Endothelial cell of umbilical vein (primary cell): ENCODE measurements at regions of chr4 and their contacts with region 1.

Region 1: DNA sequence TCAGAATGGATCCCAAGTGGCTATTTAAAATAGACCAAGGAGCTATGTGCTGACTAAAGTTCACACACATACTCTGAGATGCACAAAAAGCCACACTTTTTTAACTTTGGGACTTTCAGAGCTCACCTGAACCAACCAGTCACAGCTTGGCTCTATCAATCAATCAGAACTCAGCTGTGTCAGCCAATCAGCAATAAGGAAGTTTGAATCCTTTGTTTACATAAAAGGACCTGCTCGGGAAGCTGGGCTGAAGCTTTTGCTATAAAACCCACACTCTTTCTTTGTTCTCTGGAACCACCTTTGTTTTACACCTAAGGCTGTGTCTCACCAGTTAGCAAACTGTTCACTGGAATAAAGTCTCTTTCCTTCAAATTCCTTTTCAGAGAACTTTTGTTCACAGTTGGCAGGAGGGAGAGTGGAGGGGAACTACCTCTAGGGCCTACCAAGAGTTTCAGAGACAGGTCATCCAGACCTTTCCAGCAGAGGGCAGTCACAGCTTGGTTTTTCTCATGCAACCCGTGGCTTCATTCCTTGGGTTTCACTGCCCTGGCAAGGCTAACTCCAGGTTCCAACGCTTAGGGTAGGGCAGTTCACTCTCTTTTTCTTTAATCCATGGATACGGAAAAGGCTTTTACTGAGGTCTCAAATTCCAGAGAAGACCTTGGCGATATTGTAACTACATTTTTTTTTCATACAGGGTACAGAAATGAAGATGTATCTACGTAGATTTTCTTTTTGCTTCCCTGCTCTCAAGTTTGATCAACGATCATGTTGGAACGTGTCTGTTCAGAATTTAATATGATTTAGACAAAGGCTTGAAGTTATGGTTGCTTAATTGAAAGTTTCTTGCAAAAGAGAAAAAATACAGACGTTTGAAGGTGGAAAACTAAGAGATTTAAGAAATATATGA is 80.7 kb downstream of the GPRIN3 start:
- DNase-seq: peak; percentile 79
- H3K4me3 ChIP-seq: no peak overlapping the region
- H3K27ac ChIP-seq: no peak overlapping the region
- H3K4me1 ChIP-seq: peaks cover 2% of the 10 kb centered on the region
- H3K27me3 ChIP-seq: no peaks in the 10 kb centered on the region
- CTCF ChIP-seq: peak; percentile 70 to 75
- POLR2A ChIP-seq: no peak

Region 2: GRCh38 chr4:89158884-89159503 is 67.9 kb before region 1 on chr4:
- CTCF ChIA-PET with region 1: interaction called, 16 read pairs
- POLR2A ChIA-PET with region 1: no interaction called
- dilution Hi-C with region 1: no loop called
- intact Hi-C with region 1: loop called (anchors 1 kb)
- DNase-seq: peak; percentile 77
- H3K4me3 ChIP-seq: no peak overlapping the region
- H3K27ac ChIP-seq: no peak overlapping the region
- H3K4me1 ChIP-seq: peaks cover 23% of the 10 kb centered on the region
- H3K27me3 ChIP-seq: no peaks in the 10 kb centered on the region
- CTCF ChIP-seq: peak; percentile 44 to 47
- POLR2A ChIP-seq: no peak

Region 3: GRCh38 chr4:89164400-89164799 is 62.5 kb before region 1 on chr4:
- CTCF ChIA-PET with region 1: interaction called, 16 read pairs
- POLR2A ChIA-PET with region 1: no interaction called
- dilution Hi-C with region 1: no loop called
- intact Hi-C with region 1: loop called (anchors 1 kb)
- DNase-seq: no peak
- H3K4me3 ChIP-seq: no peak overlapping the region
- H3K27ac ChIP-seq: no peak overlapping the region
- H3K4me1 ChIP-seq: peaks cover 18% of the 10 kb centered on the region
- H3K27me3 ChIP-seq: no peaks in the 10 kb centered on the region
- CTCF ChIP-seq: peak in 1 of 2 donors; percentile 3
- POLR2A ChIP-seq: no peak

Region 4: DNA sequence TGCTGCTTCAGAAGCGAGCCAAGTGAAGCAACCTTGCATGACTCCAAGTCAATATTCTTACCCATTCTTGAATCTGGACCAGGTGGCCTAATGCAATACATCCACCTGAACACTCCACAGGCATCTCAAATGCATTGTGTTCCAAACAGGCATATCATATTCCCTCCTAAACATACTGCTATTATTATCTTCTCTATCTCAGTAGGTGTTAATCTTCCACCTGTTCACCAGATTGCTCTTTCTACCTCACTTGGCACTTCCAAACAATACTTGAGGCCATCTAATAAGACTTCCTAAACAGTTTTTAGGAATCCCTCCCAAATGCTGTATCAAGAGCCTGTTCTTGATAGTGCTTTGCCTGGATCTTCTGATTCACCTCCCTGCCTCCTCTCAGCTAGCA is 10.1 kb before region 1 on chr4:
- CTCF ChIA-PET with region 1: interaction called, 17 read pairs
- POLR2A ChIA-PET with region 1: no interaction called
- dilution Hi-C with region 1: no loop called
- intact Hi-C with region 1: no loop called
- DNase-seq: no peak
- H3K4me3 ChIP-seq: no peak overlapping the region
- H3K27ac ChIP-seq: no peak overlapping the region
- H3K4me1 ChIP-seq: no peaks in the 10 kb centered on the region
- H3K27me3 ChIP-seq: peaks cover 13 to 14% of the 10 kb centered on the region in 2 experiments
- CTCF ChIP-seq: no peak
- POLR2A ChIP-seq: no peak

Region 5: DNA sequence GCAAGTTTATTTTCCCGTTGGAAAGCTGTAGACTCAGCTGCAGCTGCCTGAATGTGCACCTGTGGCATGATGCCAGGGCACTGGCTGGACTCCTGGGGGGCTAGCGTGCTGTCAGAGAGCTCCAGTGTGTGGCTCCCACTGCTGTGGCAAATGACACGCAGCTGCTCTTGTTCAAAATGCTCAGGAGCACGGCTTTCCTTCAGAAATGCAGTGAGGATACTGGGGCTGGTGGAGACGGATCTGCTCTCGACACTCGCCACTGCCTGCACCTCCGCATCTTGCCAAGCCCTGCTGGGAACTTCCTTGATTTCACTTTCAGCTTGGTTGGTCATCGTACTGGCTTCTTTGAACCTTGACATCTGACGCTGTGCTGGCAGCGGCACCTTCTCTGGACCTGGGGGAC is 22.0 kb after region 1 on chr4:
- CTCF ChIA-PET with region 1: interaction called, 10 read pairs
- POLR2A ChIA-PET with region 1: no interaction called
- dilution Hi-C with region 1: no loop called
- intact Hi-C with region 1: no loop called
- DNase-seq: no peak
- H3K4me3 ChIP-seq: no peak overlapping the region
- H3K27ac ChIP-seq: no peak overlapping the region
- H3K4me1 ChIP-seq: no peaks in the 10 kb centered on the region
- H3K27me3 ChIP-seq: peaks cover 2 to 5% of the 10 kb centered on the region in 2 experiments
- CTCF ChIP-seq: no peak
- POLR2A ChIP-seq: no peak

Region 6: GRCh38 chr4:89254847-89255246 is 27.9 kb after region 1 on chr4:
- CTCF ChIA-PET with region 1: interaction called, 10 read pairs
- POLR2A ChIA-PET with region 1: no interaction called
- dilution Hi-C with region 1: no loop called
- intact Hi-C with region 1: no loop called
- DNase-seq: peak; percentile 29
- H3K4me3 ChIP-seq: no peak overlapping the region
- H3K27ac ChIP-seq: no peak overlapping the region
- H3K4me1 ChIP-seq: no peaks in the 10 kb centered on the region
- H3K27me3 ChIP-seq: peaks cover 11% of the 10 kb centered on the region in 2 experiments
- CTCF ChIP-seq: peak; percentile 74 to 79
- POLR2A ChIP-seq: no peak

Region 7: GRCh38 chr4:89434364-89434988 is 207.6 kb after region 1 on chr4:
- CTCF ChIA-PET with region 1: interaction called, 67 read pairs
- POLR2A ChIA-PET with region 1: no interaction called
- dilution Hi-C with region 1: no loop called
- intact Hi-C with region 1: loop called (anchors 1 kb)
- DNase-seq: peak; percentile 46
- H3K4me3 ChIP-seq: no peak overlapping the region
- H3K27ac ChIP-seq: no peak overlapping the region
- H3K4me1 ChIP-seq: no peaks in the 10 kb centered on the region
- H3K27me3 ChIP-seq: peaks cover 0 to 2% of the 10 kb centered on the region in 2 experiments
- CTCF ChIP-seq: peak; percentile 38 to 62
- POLR2A ChIP-seq: no peak